GM10248 (cell line): ENCODE measurements at regions of chr5 and their contacts with region 1.

Region 1: GRCh38 chr5:74648835-74649293 is 8.3 kb upstream of the ENC1 start:
- DNase-seq: peak; percentile 65
- CTCF ChIP-seq: peak; percentile 32

Region 2: GRCh38 chr5:73911761-73912393 is 737.0 kb before region 1 on chr5:
- CTCF ChIA-PET with region 1: interaction called, 15 read pairs
- POLR2A ChIA-PET with region 1: no interaction called
- DNase-seq: no peak
- CTCF ChIP-seq: no peak

Region 3: GRCh38 chr5:74660140-74660539 is 11.3 kb after region 1 on chr5:
- CTCF ChIA-PET with region 1: interaction called, 17 read pairs
- POLR2A ChIA-PET with region 1: no interaction called
- DNase-seq: no peak
- CTCF ChIP-seq: no peak